Naive thymus-derived CD4-positive, alpha-beta T cell (primary cell): ENCODE measurements at regions of chr2 and their contacts with region 1.

Region 1: DNA sequence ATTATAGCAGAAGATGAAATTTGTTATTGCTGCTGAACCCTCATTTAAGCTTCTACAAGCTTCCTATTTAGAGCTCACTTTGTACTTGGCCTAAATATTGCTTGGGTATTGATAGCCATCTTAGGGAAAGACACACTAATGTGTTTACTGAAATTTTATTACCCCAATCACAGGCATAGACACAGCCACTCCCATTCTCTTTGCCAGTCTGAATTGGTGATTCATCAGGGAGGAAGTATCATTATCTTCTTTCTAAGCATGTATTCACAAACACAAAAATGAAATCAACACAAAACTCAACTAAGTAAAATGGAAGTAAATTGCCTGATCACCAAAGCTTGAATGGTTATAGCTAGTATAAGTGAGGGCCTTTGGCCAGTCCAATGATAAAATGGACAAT is 666.3 kb downstream of the TSN start:
- DNase-seq: no peak
- ATAC-seq: no peak
- H3K4me3 ChIP-seq: no peak overlapping the region
- H3K4me3 Mint-ChIP-seq: no peak overlapping the region
- H3K27ac ChIP-seq: no peak overlapping the region
- H3K27ac Mint-ChIP-seq: no peak overlapping the region
- H3K4me1 ChIP-seq: no peaks in the 10 kb centered on the region
- H3K4me1 Mint-ChIP-seq: no peaks in the 10 kb centered on the region
- H3K27me3 ChIP-seq: no peaks in the 10 kb centered on the region
- H3K27me3 Mint-ChIP-seq: peaks cover 0 to 4% (median 0%) of the 10 kb centered on the region in 5 donors

Region 2: GRCh38 chr2:122378521-122378920 is 43.3 kb before region 1 on chr2:
- CTCF ChIA-PET with region 1: no interaction called
- POLR2A ChIA-PET with region 1: no interaction called
- intact Hi-C with region 1: loop called in 1 of 2 experiments (anchors 1 kb)
- DNase-seq: no peak
- ATAC-seq: no peak
- H3K4me3 ChIP-seq: no peak overlapping the region
- H3K4me3 Mint-ChIP-seq: no peak overlapping the region
- H3K27ac ChIP-seq: no peak overlapping the region
- H3K27ac Mint-ChIP-seq: no peak overlapping the region
- H3K4me1 ChIP-seq: no peaks in the 10 kb centered on the region
- H3K4me1 Mint-ChIP-seq: no peaks in the 10 kb centered on the region
- H3K27me3 ChIP-seq: no peaks in the 10 kb centered on the region
- H3K27me3 Mint-ChIP-seq: no peaks in the 10 kb centered on the region